ENCODE measurements at regions of chr4 and their contacts with region 1.

Region 1: GRCh38 chr4:148391056-148391455 is 51.2 kb downstream of the NR3C2 start:
- DNase-seq: no peak
- H3K4me3 Mint-ChIP-seq: no peak overlapping the region
- H3K27ac Mint-ChIP-seq: no peak overlapping the region
- H3K4me1 Mint-ChIP-seq: peaks cover 27% of the 10 kb centered on the region
- H3K27me3 Mint-ChIP-seq: no peaks in the 10 kb centered on the region

Region 2: GRCh38 chr4:148376151-148376550 is 14.9 kb before region 1 on chr4:
- CTCF ChIA-PET with region 1: interaction called, 3 read pairs
- POLR2A ChIA-PET with region 1: no interaction called
- intact Hi-C with region 1: loop called (anchors 2 kb)
- DNase-seq: peak; percentile 32
- H3K4me3 Mint-ChIP-seq: peak overlapping the region; percentile 61
- H3K27ac Mint-ChIP-seq: peak overlapping the region; percentile 77
- H3K4me1 Mint-ChIP-seq: peaks cover 28% of the 10 kb centered on the region
- H3K27me3 Mint-ChIP-seq: no peaks in the 10 kb centered on the region